ENCODE measurements at regions of chr11 and their contacts with region 1.

Region 1: GRCh38 chr11:11036848-11037732 is 179.2 kb upstream of the ZBED5 start:
- DNase-seq: no peak
- ATAC-seq: peak; percentile 87

Region 2: GRCh38 chr11:11787305-11788062 is 750.4 kb after region 1 on chr11:
- intact Hi-C with region 1: loop called (anchors 5 kb)
- DNase-seq: peak; percentile 73
- ATAC-seq: peak; percentile 95